ENCODE measurements at regions of chr9 and their contacts with region 1.

Region 1: GRCh38 chr9:94213511-94214124 is 45.5 kb upstream of the ZNF169 start:
- DNase-seq: peak; percentile 85

Region 2: GRCh38 chr9:94002316-94003140 is 211.1 kb before region 1 on chr9:
- intact Hi-C with region 1: no loop called
- DNase-seq: no peak

Region 3: DNA sequence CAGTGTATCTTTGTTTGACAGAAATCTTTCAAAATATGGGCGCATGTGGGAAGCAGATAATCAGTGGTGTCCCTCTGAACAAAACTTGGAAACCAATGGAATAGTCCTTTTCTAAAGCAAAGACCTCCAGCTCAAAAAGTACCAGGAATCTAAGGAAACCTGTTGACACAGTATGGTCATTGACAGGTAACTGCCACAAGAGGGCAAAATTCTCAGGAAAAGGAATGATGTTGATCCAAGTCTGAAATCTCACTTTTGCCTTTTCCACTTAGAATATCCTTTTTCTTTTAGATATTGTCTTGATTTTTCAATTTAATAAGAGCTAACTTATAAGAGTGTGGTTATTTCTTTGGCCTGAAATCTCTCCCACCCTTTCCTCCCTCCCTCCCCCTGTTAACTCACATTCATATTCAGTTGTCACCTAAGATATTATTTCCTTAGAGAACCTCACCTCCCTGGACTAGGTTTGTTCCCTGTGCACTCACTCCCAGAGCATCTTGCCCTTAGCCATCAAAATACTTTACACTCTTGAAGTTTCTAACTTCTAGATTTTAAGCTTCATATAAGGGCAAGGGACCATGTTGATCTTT is 199.5 kb before region 1 on chr9:
- intact Hi-C with region 1: loop called (anchors 5 kb)
- DNase-seq: no peak

Region 4: GRCh38 chr9:94065535-94065961 is 148.1 kb before region 1 on chr9:
- intact Hi-C with region 1: loop called (anchors 1 kb)
- DNase-seq: no peak

Region 5: GRCh38 chr9:94300548-94301301 is 87.1 kb after region 1 on chr9:
- intact Hi-C with region 1: no loop called
- DNase-seq: no peak